Mammary epithelial cell (primary cell): ENCODE measurements at regions of chr2 and their contacts with region 1.

Region 1: GRCh38 chr2:231227309-231228162 is 29.1 kb downstream of the ARMC9 start:
- DNase-seq: peak; percentile 65
- H3K4me3 ChIP-seq: no peak overlapping the region
- H3K27ac ChIP-seq: no peak overlapping the region
- H3K4me1 ChIP-seq: no peaks in the 10 kb centered on the region
- H3K27me3 ChIP-seq: no peaks in the 10 kb centered on the region
- CTCF ChIP-seq: peak; percentile 89 to 90

Region 2: GRCh38 chr2:231170055-231170454 is 57.5 kb before region 1 on chr2:
- CTCF ChIA-PET with region 1: no interaction called
- dilution Hi-C with region 1: loop called (anchors 5 kb)
- in situ Hi-C with region 1: no loop called
- intact Hi-C with region 1: no loop called
- DNase-seq: no peak
- H3K4me3 ChIP-seq: no peak overlapping the region
- H3K27ac ChIP-seq: no peak overlapping the region
- H3K4me1 ChIP-seq: no peaks in the 10 kb centered on the region
- H3K27me3 ChIP-seq: no peaks in the 10 kb centered on the region
- CTCF ChIP-seq: no peak

Region 3: GRCh38 chr2:231399853-231400680 is 172.5 kb after region 1 on chr2:
- CTCF ChIA-PET with region 1: interaction called, 4 read pairs
- dilution Hi-C with region 1: no loop called
- in situ Hi-C with region 1: no loop called
- intact Hi-C with region 1: loop called (anchors 1 kb)
- DNase-seq: peak; percentile 25
- H3K4me3 ChIP-seq: no peak overlapping the region
- H3K27ac ChIP-seq: no peak overlapping the region
- H3K4me1 ChIP-seq: peaks cover 13% of the 10 kb centered on the region
- H3K27me3 ChIP-seq: peaks cover 8% of the 10 kb centered on the region
- CTCF ChIP-seq: peak; percentile 1 to 18

Region 4: GRCh38 chr2:231452799-231453508 is 225.4 kb after region 1 on chr2:
- CTCF ChIA-PET with region 1: no interaction called
- dilution Hi-C with region 1: no loop called
- in situ Hi-C with region 1: no loop called
- intact Hi-C with region 1: loop called (anchors 1 kb)
- DNase-seq: no peak
- H3K4me3 ChIP-seq: no peak overlapping the region
- H3K27ac ChIP-seq: no peak overlapping the region
- H3K4me1 ChIP-seq: no peaks in the 10 kb centered on the region
- H3K27me3 ChIP-seq: no peaks in the 10 kb centered on the region
- CTCF ChIP-seq: no peak